Aorta (tissue), 5 donors: ENCODE measurements at regions of chr3 and their contacts with region 1.

Region 1: GRCh38 chr3:170414202-170414663 is 4.4 kb upstream of the CLDN11 start:
- DNase-seq: peak in 1 of 2 donors; percentile 50
- ATAC-seq: peak; percentile 78
- H3K4me3 ChIP-seq: no peak overlapping the region
- H3K27ac ChIP-seq: no peak overlapping the region
- H3K4me1 ChIP-seq: no peaks in the 10 kb centered on the region
- H3K27me3 ChIP-seq: no peaks in the 10 kb centered on the region

Region 2: GRCh38 chr3:170257145-170257544 is 157.1 kb before region 1 on chr3:
- intact Hi-C with region 1: no loop called
- DNase-seq: no peak
- ATAC-seq: no peak
- H3K4me3 ChIP-seq: no peak overlapping the region
- H3K27ac ChIP-seq: no peak overlapping the region
- H3K4me1 ChIP-seq: no peaks in the 10 kb centered on the region
- H3K27me3 ChIP-seq: no peaks in the 10 kb centered on the region

Region 3: GRCh38 chr3:170307671-170308403 is 106.4 kb before region 1 on chr3:
- intact Hi-C with region 1: loop called (anchors 2 to 5 kb)
- DNase-seq: no peak
- ATAC-seq: no peak
- H3K4me3 ChIP-seq: no peak overlapping the region
- H3K27ac ChIP-seq: no peak overlapping the region
- H3K4me1 ChIP-seq: no peaks in the 10 kb centered on the region
- H3K27me3 ChIP-seq: no peaks in the 10 kb centered on the region